Activated T-helper 1 cell treated with anti-CD3 and anti-CD28 coated beads, Interleukin-12 subunit alpha, Interleukin-12 subunit beta, Interleukin-2, Interleukin-4 antibody, amounts not matched to agents 30 ng/mL and 10 ng/mL and 1 ng/mL, durations not matched to agents 14 hours and 24 hours and 36 hours (primary cell): ENCODE measurements at regions of chr11 and their contacts with region 1.

Region 1: DNA sequence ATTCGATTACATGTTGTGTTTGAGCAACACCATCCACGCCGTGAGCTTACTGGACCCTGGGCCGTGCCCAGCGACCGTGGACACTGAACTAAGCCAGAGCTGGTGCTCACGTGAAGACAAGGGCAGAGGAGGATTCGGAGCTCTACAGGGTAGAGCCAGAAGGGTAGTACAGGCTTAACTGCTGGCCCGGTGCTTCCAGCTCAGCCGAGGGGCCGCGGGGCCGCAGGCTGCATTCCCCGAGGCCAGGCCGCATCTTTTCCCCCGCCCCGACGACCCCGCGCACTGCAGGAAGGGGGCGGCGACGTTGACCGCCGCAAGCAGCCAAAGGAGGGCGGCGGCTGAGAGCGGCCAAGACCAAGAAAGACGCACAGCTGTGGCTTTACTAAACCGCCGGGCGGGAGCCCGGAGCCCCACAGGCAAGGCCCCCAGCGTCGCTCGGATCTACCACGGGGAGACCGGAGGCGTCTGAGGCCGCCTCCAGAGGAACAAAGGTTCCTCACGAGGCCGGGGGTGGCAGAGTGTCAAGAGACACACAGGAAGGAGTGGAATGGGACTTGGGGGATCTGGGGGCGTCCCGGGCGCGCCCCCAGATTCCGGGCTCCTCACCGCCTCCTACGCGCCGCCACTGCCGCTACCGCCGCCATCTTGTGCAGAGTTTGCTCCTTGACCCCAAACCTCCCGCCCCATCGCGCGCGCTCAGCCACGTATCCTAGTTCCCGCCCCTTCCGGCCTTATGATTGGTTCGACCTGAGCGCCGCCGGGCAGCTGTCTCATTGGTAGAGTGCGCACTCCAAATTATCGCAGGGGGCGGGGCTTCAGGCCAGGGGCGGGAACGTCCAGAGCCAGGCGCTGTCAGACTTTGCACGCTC is at the start of gene GANAB:
- DNase-seq: peak; percentile 97
- H3K4me3 Mint-ChIP-seq: peak within 1 kb of the TSS; percentile 100
- H3K27ac Mint-ChIP-seq: peak within 1 kb of the TSS; percentile 98
- H3K4me1 Mint-ChIP-seq: peaks cover 25% of the 10 kb centered on the region
- H3K27me3 Mint-ChIP-seq: no peaks in the 10 kb centered on the region
- total RNA-seq, gene GANAB: 238 and 255 TPM in 2 replicates

Region 2: DNA sequence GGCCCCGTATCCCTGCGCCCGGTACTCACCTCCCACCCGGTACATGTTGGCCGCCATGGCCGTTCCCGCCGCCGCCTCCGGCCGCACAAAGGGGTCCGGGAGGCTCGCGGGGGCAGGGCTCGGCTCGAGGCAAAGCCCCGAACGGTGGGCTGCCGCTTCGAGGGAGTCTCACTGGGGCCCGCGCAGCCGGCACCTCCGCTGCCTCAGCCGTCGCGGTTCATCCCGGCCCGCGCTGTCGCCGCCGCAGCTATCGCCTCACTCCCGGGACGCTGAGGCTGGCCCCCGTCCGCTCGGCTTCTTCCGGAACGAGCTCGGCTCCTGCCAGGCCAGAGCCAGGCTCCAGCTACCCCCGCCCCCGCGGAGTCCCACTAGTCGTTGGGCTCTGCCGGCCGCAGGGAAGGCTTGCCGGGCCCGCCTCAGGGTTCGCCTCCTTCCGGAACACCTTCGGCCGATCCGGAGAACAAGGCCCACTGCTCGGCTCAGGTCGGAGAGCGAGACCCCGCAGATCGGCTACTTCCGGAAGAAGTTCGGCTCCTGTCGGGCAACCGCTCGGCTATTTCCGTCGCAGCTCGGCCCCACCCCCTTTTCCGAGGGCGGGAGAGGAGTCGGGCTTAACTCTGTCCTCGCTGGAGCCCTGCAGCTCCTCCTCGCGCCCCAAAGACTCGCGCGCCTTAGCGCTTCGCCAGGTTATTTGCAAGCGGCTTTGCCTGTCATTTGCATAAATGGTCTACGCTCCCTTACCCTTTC is 44.6 kb before region 1 on chr11 and contains the start of gene MTA2:
- intact Hi-C with region 1: loop called (anchors 1 kb)
- DNase-seq: peak; percentile 100
- H3K4me3 Mint-ChIP-seq: peak within 1 kb of the TSS; percentile 95
- H3K27ac Mint-ChIP-seq: peak within 1 kb of the TSS; percentile 92
- H3K4me1 Mint-ChIP-seq: peaks cover 54% of the 10 kb centered on the region
- H3K27me3 Mint-ChIP-seq: no peaks in the 10 kb centered on the region
- total RNA-seq, gene MTA2: 224 and 230 TPM in 2 replicates

Region 3: GRCh38 chr11:62621567-62622470 is 24.4 kb before region 1 on chr11 and contains the start of gene B3GAT3:
- intact Hi-C with region 1: loop called (anchors 1 kb)
- DNase-seq: peak; percentile 96
- H3K4me3 Mint-ChIP-seq: peak within 1 kb of the TSS; percentile 95
- H3K27ac Mint-ChIP-seq: peak within 1 kb of the TSS; percentile 96
- H3K4me1 Mint-ChIP-seq: peaks cover 25% of the 10 kb centered on the region
- H3K27me3 Mint-ChIP-seq: no peaks in the 10 kb centered on the region
- total RNA-seq, gene B3GAT3: 93.8 and 94.3 TPM in 2 replicates

Region 4: GRCh38 chr11:62671575-62672389 is 25.6 kb after region 1 on chr11 and contains the starts of genes LBHD1 and UQCC3:
- intact Hi-C with region 1: loop called (anchors 1 kb)
- DNase-seq: peak; percentile 75
- H3K4me3 Mint-ChIP-seq: peak within 1 kb of the TSS; percentile 97
- H3K27ac Mint-ChIP-seq: peak within 1 kb of the TSS; percentile 98
- H3K4me1 Mint-ChIP-seq: peaks cover 34% of the 10 kb centered on the region
- H3K27me3 Mint-ChIP-seq: no peaks in the 10 kb centered on the region
- total RNA-seq, gene LBHD1: 23.4 and 24.3 TPM in 2 replicates
- total RNA-seq, gene UQCC3: 8.9 and 11.4 TPM in 2 replicates

Region 5: GRCh38 chr11:62855571-62856332 is 209.6 kb after region 1 on chr11:
- intact Hi-C with region 1: loop called (anchors 1 kb)
- DNase-seq: peak; percentile 99
- H3K4me3 Mint-ChIP-seq: peak overlapping the region; percentile 98
- H3K27ac Mint-ChIP-seq: peak overlapping the region; percentile 98
- H3K4me1 Mint-ChIP-seq: peaks cover 71% of the 10 kb centered on the region
- H3K27me3 Mint-ChIP-seq: peaks cover 5% of the 10 kb centered on the region